BJ (cell line): ENCODE measurements at regions of chr17 and their contacts with region 1.

Region 1: GRCh38 chr17:3683054-3683511 is 12.9 kb downstream of the P2RX5 start:
- DNase-seq: no peak
- H3K4me3 ChIP-seq: no peak overlapping the region
- H3K27me3 ChIP-seq: no peaks in the 10 kb centered on the region
- CTCF ChIP-seq: peak; percentile 96

Region 2: GRCh38 chr17:3575511-3575910 is 107.6 kb before region 1 on chr17:
- CTCF ChIA-PET with region 1: no interaction called
- POLR2A ChIA-PET with region 1: no interaction called
- DNase-seq: peak; percentile 90
- H3K4me3 ChIP-seq: no peak overlapping the region
- H3K27me3 ChIP-seq: no peaks in the 10 kb centered on the region
- CTCF ChIP-seq: no peak

Region 3: GRCh38 chr17:3668279-3669085 is 14.6 kb before region 1 on chr17 and contains the starts of genes EMC6 and TAX1BP3:
- CTCF ChIA-PET with region 1: interaction called, 10 read pairs
- POLR2A ChIA-PET with region 1: no interaction called
- DNase-seq: peak; percentile 87
- H3K4me3 ChIP-seq: peak within 1 kb of the TSS; percentile 99
- H3K27me3 ChIP-seq: no peaks in the 10 kb centered on the region
- CTCF ChIP-seq: no peak
- polyA plus RNA-seq, gene EMC6: 38.6 and 42.2 TPM in 2 replicates
- polyA plus RNA-seq, gene TAX1BP3: 137 and 207 TPM in 2 replicates

Region 4: DNA sequence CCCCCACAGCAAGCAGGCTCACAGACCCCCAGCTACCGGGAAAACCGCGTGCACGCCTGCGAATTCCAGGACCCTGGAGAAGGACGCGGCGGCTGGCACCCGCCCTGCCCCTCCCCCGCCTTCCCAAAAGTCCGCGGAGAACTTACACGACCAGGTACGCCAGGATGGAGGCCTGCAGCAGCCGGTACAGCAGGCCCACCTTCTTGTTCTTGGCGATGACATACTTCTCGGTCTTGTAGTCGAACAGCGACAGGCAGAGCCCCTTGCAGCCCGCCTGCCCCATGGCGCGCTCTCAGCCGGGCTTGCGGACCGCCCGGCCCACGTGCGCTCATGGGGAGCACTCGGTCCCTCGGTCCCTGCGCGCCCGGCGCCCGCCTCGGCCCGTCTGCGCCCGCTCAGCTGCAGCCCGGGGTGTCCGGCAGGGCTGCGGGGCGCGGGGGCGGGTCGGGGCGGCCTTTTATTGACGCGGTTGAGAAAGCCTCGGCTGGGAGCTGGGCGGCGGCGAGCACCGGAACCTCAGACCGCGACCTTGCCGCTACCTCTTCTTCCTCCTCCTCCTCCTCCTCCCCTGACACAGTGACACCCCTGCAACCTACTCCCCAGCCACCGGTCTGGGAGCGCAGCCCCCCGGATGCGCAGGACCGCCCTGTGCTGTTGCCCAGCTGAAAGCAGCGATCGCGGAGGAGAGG is 12.8 kb after region 1 on chr17 and contains the start of gene P2RX5:
- CTCF ChIA-PET with region 1: interaction called, 26 read pairs
- POLR2A ChIA-PET with region 1: no interaction called
- DNase-seq: no peak
- H3K4me3 ChIP-seq: peak within 1 kb of the TSS; percentile 58
- H3K27me3 ChIP-seq: peaks cover 2% of the 10 kb centered on the region; the same call in 1 of the 2 replicates
- CTCF ChIP-seq: no peak
- polyA plus RNA-seq, gene P2RX5: 5.0 and 6.5 TPM in 2 replicates

Region 5: DNA sequence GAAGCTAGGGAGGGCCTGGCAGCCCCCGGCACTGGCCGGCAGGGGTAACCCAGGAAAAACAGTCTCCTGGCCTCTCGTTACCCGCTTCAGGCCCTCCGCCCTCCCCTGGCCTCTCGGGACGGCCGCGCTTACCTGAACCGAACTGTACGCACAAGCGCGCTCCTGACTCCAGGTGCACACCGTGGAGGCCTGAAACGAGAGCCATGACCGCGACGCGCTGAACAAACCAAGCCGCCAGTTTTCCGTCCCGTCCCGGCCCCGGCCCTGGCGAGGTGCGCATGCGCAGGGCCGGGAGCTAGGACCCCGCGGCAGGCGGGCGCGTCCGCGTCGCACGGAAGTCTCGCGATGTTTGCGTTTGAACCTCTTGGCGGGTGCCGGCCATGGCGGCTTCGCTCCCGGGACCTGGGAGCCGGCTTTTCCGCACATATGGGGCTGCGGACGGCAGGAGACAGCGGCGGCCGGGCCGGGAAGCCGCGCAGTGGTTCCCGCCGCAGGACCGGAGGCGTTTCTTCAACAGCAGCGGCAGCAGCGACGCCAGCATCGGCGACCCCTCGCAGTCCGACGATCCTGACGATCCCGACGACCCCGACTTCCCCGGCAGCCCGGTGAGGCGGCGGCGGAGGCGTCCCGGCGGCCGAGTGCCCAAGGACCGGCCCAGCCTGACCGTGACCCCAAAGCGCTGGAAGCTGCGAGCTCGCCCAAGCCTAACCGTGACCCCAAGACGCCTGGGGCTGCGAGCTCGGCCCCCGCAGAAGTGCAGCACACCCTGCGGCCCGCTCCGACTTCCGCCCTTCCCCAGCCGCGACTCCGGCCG is 40.7 kb after region 1 on chr17 and contains the start of gene HASPIN:
- CTCF ChIA-PET with region 1: interaction called, 17 read pairs
- POLR2A ChIA-PET with region 1: no interaction called
- DNase-seq: no peak
- H3K4me3 ChIP-seq: peak within 1 kb of the TSS; percentile 77
- H3K27me3 ChIP-seq: no peaks in the 10 kb centered on the region
- CTCF ChIP-seq: peak; percentile 48
- polyA plus RNA-seq, gene HASPIN: 2.1 and 2.9 TPM in 2 replicates

Region 6: GRCh38 chr17:3796110-3796821 is 113.2 kb after region 1 on chr17:
- CTCF ChIA-PET with region 1: no interaction called
- POLR2A ChIA-PET with region 1: no interaction called
- DNase-seq: no peak
- H3K4me3 ChIP-seq: no peak overlapping the region
- H3K27me3 ChIP-seq: no peaks in the 10 kb centered on the region
- CTCF ChIP-seq: no peak